PC-9 (cell line): ENCODE measurements at regions of chr14 and their contacts with region 1.

Region 1: GRCh38 chr14:102524466-102525218 is 15.1 kb upstream of the ANKRD9 start:
- DNase-seq: peak; percentile 99 to 100
- H3K4me3 ChIP-seq: peak overlapping the region; percentile 62
- H3K27ac ChIP-seq: peak overlapping the region; percentile 93
- H3K4me1 ChIP-seq: peaks cover 50% of the 10 kb centered on the region
- H3K27me3 ChIP-seq: no peaks in the 10 kb centered on the region
- CTCF ChIP-seq: peak; percentile 100

Region 2: DNA sequence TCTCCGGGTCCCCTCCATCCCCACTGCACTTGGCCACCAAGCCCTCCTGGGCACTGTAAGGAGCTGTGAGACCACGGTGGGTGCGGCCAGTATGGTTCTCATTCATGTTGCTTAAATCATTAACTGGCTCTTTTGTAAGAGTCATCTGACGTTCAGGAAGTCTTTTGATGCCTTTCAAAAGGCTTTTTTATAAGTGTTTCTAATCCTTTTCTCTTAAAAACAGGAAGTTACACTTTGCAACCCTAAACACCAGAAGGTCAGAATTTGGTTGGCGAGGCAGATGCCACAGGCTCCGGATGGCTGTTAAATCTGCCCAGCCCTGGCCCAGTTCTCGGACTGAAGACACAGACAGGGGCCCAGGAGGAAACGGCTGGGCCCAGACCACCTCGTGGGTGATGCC is 989.4 kb before region 1 on chr14:
- CTCF ChIA-PET with region 1: no interaction called
- POLR2A ChIA-PET with region 1: no interaction called
- intact Hi-C with region 1: no loop called
- DNase-seq: no peak
- H3K4me3 ChIP-seq: no peak overlapping the region
- H3K27ac ChIP-seq: no peak overlapping the region
- H3K4me1 ChIP-seq: no peaks in the 10 kb centered on the region
- H3K27me3 ChIP-seq: 0 out of 2 replicates have a peak, but pooled peaks cover 12% of the 10 kb centered on the region
- CTCF ChIP-seq: no peak

Region 3: GRCh38 chr14:101665515-101666078 is 859.0 kb before region 1 on chr14:
- CTCF ChIA-PET with region 1: interaction called, 14 read pairs
- POLR2A ChIA-PET with region 1: no interaction called
- intact Hi-C with region 1: no loop called
- DNase-seq: peak; percentile 71 to 81
- H3K4me3 ChIP-seq: no peak overlapping the region
- H3K27ac ChIP-seq: no peak overlapping the region
- H3K4me1 ChIP-seq: no peaks in the 10 kb centered on the region
- H3K27me3 ChIP-seq: no peaks in the 10 kb centered on the region
- CTCF ChIP-seq: peak; percentile 99

Region 4: DNA sequence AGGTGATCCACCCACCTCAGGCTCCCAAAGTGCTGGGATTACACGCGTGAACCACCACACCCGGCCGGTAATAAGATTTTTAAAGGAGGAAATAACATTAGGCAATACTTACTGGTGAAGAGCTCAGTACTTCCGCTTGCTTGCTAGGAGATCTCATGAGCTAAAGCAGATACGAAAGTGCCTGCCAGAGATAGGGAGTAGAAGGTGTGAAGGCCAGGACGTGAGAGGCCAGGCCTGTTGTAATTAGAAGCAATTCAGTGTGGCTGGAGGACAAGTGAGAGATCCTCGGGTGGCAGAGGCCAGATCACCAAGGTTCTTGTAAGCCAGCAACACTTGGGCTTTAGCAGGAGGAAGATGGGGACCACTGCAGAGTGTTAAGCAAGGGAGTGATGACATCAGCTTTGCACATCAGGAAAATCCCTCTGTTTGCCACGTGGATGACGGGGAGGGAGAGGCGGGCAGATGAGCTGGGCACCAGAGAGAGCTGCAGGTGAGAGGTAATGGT is 154.3 kb before region 1 on chr14:
- CTCF ChIA-PET with region 1: no interaction called
- POLR2A ChIA-PET with region 1: no interaction called
- intact Hi-C with region 1: no loop called
- DNase-seq: peak in 1 of 2 experiments; percentile 31
- H3K4me3 ChIP-seq: no peak overlapping the region
- H3K27ac ChIP-seq: no peak overlapping the region
- H3K4me1 ChIP-seq: no peaks in the 10 kb centered on the region
- H3K27me3 ChIP-seq: no peaks in the 10 kb centered on the region
- CTCF ChIP-seq: no peak

Region 5: GRCh38 chr14:102568114-102568621 is 43.5 kb after region 1 on chr14:
- CTCF ChIA-PET with region 1: interaction called, 5 read pairs
- POLR2A ChIA-PET with region 1: interaction called, 3 read pairs
- intact Hi-C with region 1: loop called (anchors 1 kb)
- DNase-seq: peak; percentile 87 to 95
- H3K4me3 ChIP-seq: peak overlapping the region; percentile 7; the same call in 1 of the 2 replicates
- H3K27ac ChIP-seq: peak overlapping the region; percentile 72
- H3K4me1 ChIP-seq: peaks cover 26% of the 10 kb centered on the region
- H3K27me3 ChIP-seq: no peaks in the 10 kb centered on the region
- CTCF ChIP-seq: no peak

Region 6: GRCh38 chr14:102655170-102655569 is 130.5 kb after region 1 on chr14:
- CTCF ChIA-PET with region 1: interaction called, 22 read pairs
- POLR2A ChIA-PET with region 1: interaction called, 3 read pairs
- intact Hi-C with region 1: no loop called
- DNase-seq: peak; percentile 25 to 85
- H3K4me3 ChIP-seq: no peak overlapping the region
- H3K27ac ChIP-seq: peak overlapping the region; percentile 49
- H3K4me1 ChIP-seq: peaks cover 30% of the 10 kb centered on the region
- H3K27me3 ChIP-seq: no peaks in the 10 kb centered on the region
- CTCF ChIP-seq: no peak

Region 7: GRCh38 chr14:102774391-102775153 is 249.9 kb after region 1 on chr14:
- CTCF ChIA-PET with region 1: no interaction called
- POLR2A ChIA-PET with region 1: no interaction called
- intact Hi-C with region 1: loop called (anchors 2 kb)
- DNase-seq: peak; percentile 67 to 70
- H3K4me3 ChIP-seq: no peak overlapping the region
- H3K27ac ChIP-seq: no peak overlapping the region
- H3K4me1 ChIP-seq: peaks cover 16% of the 10 kb centered on the region
- H3K27me3 ChIP-seq: no peaks in the 10 kb centered on the region
- CTCF ChIP-seq: peak; percentile 87

Region 8: GRCh38 chr14:103014466-103015319 is 490.1 kb after region 1 on chr14:
- CTCF ChIA-PET with region 1: interaction called, 3 read pairs
- POLR2A ChIA-PET with region 1: no interaction called
- intact Hi-C with region 1: loop called (anchors 10 kb)
- DNase-seq: peak in 1 of 2 experiments; percentile 69
- H3K4me3 ChIP-seq: peak overlapping the region; percentile 2; the same call in 1 of the 2 replicates
- H3K27ac ChIP-seq: peak overlapping the region; percentile 58
- H3K4me1 ChIP-seq: peaks cover 70% of the 10 kb centered on the region
- H3K27me3 ChIP-seq: no peaks in the 10 kb centered on the region
- CTCF ChIP-seq: no peak

Region 9: DNA sequence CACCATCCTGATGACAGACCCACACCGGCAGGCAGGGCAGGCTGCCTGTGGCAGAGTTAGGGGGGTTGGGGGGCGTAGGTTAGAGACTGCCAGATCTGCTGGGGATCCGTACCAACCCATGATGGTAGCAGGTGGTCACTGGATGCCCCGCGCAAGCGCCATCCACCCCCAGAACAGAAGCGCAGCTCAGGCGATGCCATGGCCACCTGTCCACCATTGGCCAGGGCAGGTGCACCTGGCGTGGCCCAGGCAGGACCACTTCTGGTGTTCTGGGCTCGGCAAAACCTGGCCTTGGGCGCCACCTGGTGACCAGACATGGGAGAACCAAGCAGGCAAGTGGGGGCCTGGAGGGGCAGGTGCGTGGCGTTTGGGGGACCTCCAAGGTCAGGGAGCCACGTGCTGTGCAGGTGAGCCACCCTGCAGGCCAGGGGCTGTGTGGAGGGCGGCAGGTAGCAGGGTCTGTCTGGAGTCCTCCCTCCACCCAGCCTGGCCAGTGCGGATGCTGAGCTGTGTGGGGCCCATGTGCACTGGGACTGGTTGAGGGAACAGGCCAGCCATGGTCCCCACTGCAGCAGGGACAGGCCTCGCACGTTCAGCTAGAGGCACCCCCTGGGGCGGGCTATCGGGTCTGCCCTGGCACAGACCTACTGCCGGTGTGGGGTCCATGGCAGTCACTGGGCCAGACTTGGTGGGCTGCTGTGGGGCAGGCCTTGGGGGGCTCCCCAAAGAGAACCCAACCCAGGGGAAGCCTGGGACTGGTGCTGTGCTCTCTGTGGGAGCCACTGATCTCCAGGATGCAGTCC is 1022.2 kb after region 1 on chr14:
- CTCF ChIA-PET with region 1: no interaction called
- POLR2A ChIA-PET with region 1: no interaction called
- intact Hi-C with region 1: loop called (anchors 10 kb)
- DNase-seq: peak; percentile 72 to 89
- H3K4me3 ChIP-seq: no peak overlapping the region
- H3K27ac ChIP-seq: no peak overlapping the region
- H3K4me1 ChIP-seq: peaks cover 23% of the 10 kb centered on the region
- H3K27me3 ChIP-seq: no peaks in the 10 kb centered on the region
- CTCF ChIP-seq: peak; percentile 100